ENCODE measurements at regions of chr1 and their contacts with region 1.

Region 1: GRCh38 chr1:218323568-218324225 is 21.4 kb upstream of the TGFB2 start:
- DNase-seq: no peak
- ATAC-seq: peak in 2 of 8 donors; percentile 24 to 57
- H3K4me3 ChIP-seq: no peak overlapping the region
- H3K27ac ChIP-seq: no peak overlapping the region
- H3K4me1 ChIP-seq: no peaks in the 10 kb centered on the region
- H3K27me3 ChIP-seq: no peaks in the 10 kb centered on the region
- CTCF ChIP-seq: no peak

Region 2: DNA sequence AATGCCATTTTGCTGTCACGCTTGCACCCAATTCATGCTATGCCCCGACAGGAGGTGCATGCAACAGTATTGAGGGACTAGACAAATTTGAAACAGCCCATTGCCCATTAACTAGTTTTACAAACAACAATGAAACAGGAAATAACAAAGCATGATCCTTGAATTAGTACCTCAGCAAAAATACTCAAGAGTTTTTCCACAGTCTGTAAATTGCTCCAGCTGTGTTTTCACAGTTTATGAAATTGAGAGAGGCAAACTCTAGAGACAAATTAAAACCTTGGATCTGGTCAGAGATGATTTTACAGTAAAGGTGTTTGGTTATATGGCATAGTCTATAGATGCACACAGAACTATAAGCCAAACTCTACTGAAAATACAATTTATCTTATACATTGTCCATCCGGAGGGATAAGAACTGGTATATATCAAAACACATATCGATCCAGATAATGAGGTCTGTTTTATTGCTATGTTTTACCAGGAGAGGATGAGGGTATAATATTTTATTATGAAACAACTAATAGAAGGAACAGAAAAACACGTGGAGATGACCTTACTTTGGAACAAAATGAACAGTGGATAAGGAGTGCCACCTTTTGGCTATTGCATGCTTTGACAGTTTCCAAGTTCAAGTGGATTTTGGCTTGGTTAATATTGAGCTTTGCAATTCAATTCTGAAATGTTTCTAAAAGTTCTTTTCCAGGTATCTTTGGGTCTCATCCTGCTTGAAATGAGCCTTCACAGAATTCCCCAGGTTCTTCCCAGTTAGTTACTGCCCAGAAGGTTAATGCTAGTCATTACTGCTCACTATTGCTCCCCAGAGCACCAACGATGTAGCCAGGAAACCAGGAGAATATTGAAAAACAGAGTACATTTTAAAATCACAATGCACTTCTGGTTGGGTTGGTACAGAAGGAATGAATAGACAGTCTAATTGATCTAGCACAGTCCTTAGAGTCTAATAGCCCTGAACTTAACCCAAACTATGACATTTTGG is 1243.6 kb after region 1 on chr1:
- intact Hi-C with region 1: loop called in 2 of 10 experiments (anchors 5 to 10 kb)
- DNase-seq: peak in 1 of 2 donors; percentile 15
- ATAC-seq: peak in 7 of 8 donors; percentile 44 to 77 (median 65)
- H3K4me3 ChIP-seq: no peak overlapping the region
- H3K27ac ChIP-seq: no peak overlapping the region
- H3K4me1 ChIP-seq: peaks cover 0 to 8% (median 0%) of the 10 kb centered on the region in 9 donors
- H3K27me3 ChIP-seq: no peaks in the 10 kb centered on the region
- CTCF ChIP-seq: peak in 8 of 9 donors; percentile 19 to 71 (median 58)

Region 3: GRCh38 chr1:219812491-219813203 is 1489.0 kb after region 1 on chr1:
- intact Hi-C with region 1: loop called in 5 of 10 experiments (anchors 5 to 10 kb)
- DNase-seq: peak in 1 of 2 donors; percentile 21
- ATAC-seq: peak in 7 of 8 donors; percentile 70 to 83 (median 80)
- H3K4me3 ChIP-seq: no peak overlapping the region
- H3K27ac ChIP-seq: no peak overlapping the region
- H3K4me1 ChIP-seq: peaks cover 0 to 11% (median 4%) of the 10 kb centered on the region in 9 donors
- H3K27me3 ChIP-seq: peaks cover 0 to 10% (median 0%) of the 10 kb centered on the region in 7 donors
- CTCF ChIP-seq: peak; percentile 58 to 88 (median 79)

Measured in heart right ventricle (tissue), 16 donors.